ENCODE measurements at regions of chr6 and their contacts with region 1.

Region 1: GRCh38 chr6:11414176-11414963 is 123.2 kb upstream of the TMEM170B start:
- DNase-seq: peak; percentile 68 to 81 (median 77)
- H3K4me3 ChIP-seq: no peak overlapping the region
- H3K4me3 Mint-ChIP-seq: peak overlapping the region; percentile 30 to 71 (median 64)
- H3K27ac ChIP-seq: no peak overlapping the region
- H3K27ac Mint-ChIP-seq: peak overlapping the region; percentile 17 to 93 (median 78)
- H3K4me1 ChIP-seq: peaks cover 34% of the 10 kb centered on the region
- H3K4me1 Mint-ChIP-seq: peaks cover 19 to 37% (median 25%) of the 10 kb centered on the region in 4 donors
- H3K27me3 ChIP-seq: no peaks in the 10 kb centered on the region
- H3K27me3 Mint-ChIP-seq: no peaks in the 10 kb centered on the region

Region 2: GRCh38 chr6:11366183-11366933 is 48.0 kb before region 1 on chr6:
- CTCF ChIA-PET with region 1: no interaction called
- POLR2A ChIA-PET with region 1: no interaction called
- intact Hi-C with region 1: loop called (anchors 10 kb)
- DNase-seq: peak; percentile 19 to 79 (median 38)
- H3K4me3 ChIP-seq: peak overlapping the region; percentile 9 to 42
- H3K4me3 Mint-ChIP-seq: peak overlapping the region; percentile 58 to 78 (median 72)
- H3K27ac ChIP-seq: peak overlapping the region; percentile 38
- H3K27ac Mint-ChIP-seq: peak overlapping the region; percentile 53 to 94 (median 79)
- H3K4me1 ChIP-seq: peaks cover 62% of the 10 kb centered on the region
- H3K4me1 Mint-ChIP-seq: peaks cover 60 to 92% (median 67%) of the 10 kb centered on the region in 4 donors
- H3K27me3 ChIP-seq: no peaks in the 10 kb centered on the region
- H3K27me3 Mint-ChIP-seq: no peaks in the 10 kb centered on the region

Measured in CD4-positive, alpha-beta memory T cell (primary cell).